K562 (cell line): ENCODE measurements at regions of chr3 and their contacts with region 1.

Region 1: GRCh38 chr3:56783644-56784447 is 17.9 kb downstream of the ARHGEF3 start:
- DNase-seq: no peak
- ATAC-seq: no peak
- H3K4me3 ChIP-seq: no peak overlapping the region
- H3K27ac ChIP-seq: no peak overlapping the region
- H3K4me1 ChIP-seq: no peaks in the 10 kb centered on the region
- H3K27me3 ChIP-seq: peaks cover 2 to 13% of the 10 kb centered on the region in 2 experiments; a peak in 4 of 5 replicates
- CTCF ChIP-seq: no peak
- EP300 ChIP-seq: no peak
- POLR2A ChIP-seq: no peak
- RAD21 ChIP-seq: no peak

Region 2: GRCh38 chr3:56711344-56711743 is 72.5 kb before region 1 on chr3:
- CTCF ChIA-PET with region 1: no interaction called
- POLR2A ChIA-PET with region 1: no interaction called
- in situ Hi-C with region 1: loop called (anchors 10 kb)
- intact Hi-C with region 1: no loop called
- DNase-seq: no peak
- ATAC-seq: no peak
- H3K4me3 ChIP-seq: no peak overlapping the region
- H3K27ac ChIP-seq: no peak overlapping the region
- H3K4me1 ChIP-seq: no peaks in the 10 kb centered on the region
- H3K27me3 ChIP-seq: no peaks in the 10 kb centered on the region
- CTCF ChIP-seq: no peak
- EP300 ChIP-seq: no peak
- POLR2A ChIP-seq: no peak
- RAD21 ChIP-seq: no peak